Sigmoid colon (tissue), 7 donors: ENCODE measurements at regions of chr2 and their contacts with region 1.

Region 1: DNA sequence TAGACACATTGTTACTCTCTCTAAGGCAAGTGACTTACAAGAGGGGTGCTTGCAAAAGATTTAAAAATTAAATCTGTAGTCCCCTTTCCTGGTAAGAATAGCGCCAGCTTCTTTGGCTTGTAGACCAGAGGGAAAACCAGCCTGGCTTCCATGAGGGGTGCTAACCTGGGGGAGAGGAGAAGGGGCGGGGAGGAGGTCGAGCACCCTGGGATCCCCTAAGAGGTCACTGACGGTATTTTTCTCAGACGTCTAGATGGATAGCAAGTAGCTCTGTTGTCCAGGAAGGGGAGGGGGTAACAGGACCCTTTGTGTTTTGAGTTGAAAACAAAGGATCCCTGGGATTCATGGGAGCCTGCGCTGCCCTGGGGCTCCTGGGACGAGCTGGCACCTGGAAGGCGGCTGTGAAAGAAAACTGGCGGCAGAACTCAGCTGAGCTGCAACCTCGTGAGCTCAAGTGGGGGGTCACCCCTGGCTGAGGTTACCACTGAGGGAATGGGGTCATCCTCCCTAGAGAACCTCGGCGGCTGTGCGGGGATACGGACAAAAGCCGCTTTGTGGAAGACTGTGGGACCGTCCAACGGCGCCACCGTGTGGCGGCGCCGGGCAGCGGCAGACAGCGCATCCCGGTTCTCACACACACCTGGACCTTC is 37.8 kb upstream of the MRPL19 start:
- DNase-seq: no peak
- H3K4me3 ChIP-seq: no peak overlapping the region
- H3K27ac ChIP-seq: no peak overlapping the region
- H3K4me1 ChIP-seq: peaks cover 0 to 5% (median 1%) of the 10 kb centered on the region in 4 donors
- H3K27me3 ChIP-seq: peaks cover 0 to 22% (median 0%) of the 10 kb centered on the region in 3 donors
- CTCF ChIP-seq: peak in 3 of 4 experiments; percentile 39 to 75 (median 45)
- EP300 ChIP-seq: no peak
- POLR2A ChIP-seq: no peak

Region 2: DNA sequence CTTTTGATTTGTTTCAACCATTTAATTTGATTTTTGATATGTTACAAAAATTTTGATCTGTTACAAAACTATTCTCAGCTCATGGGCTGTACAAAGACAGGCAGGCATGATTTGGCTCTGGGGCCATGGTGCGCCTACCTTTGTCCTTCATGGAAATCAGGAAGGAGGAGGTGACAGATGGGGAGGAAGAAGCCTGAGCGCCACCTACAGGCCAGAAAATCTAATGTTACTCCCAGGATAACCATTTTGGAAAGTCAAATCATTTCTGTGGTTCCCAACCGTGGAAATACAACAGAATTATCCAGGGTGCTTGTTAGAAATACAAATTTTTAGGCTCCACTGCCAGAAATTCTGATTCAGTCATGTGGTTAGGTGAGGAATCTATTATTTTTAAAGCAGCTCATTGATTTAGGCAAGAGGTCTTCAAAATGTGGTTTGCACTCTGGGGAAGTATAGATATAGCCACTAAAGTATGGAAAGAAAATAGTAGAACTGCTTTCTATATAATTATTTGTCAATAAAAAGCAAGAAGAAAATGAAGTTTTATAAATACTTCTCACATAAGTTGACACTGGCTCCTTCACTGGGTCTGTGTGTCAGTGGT is 142.0 kb before region 1 on chr2:
- intact Hi-C with region 1: loop called (anchors 10 kb)
- DNase-seq: no peak
- H3K4me3 ChIP-seq: no peak overlapping the region
- H3K27ac ChIP-seq: no peak overlapping the region
- H3K4me1 ChIP-seq: no peaks in the 10 kb centered on the region
- H3K27me3 ChIP-seq: no peaks in the 10 kb centered on the region
- CTCF ChIP-seq: no peak
- EP300 ChIP-seq: no peak
- POLR2A ChIP-seq: no peak

Region 3: DNA sequence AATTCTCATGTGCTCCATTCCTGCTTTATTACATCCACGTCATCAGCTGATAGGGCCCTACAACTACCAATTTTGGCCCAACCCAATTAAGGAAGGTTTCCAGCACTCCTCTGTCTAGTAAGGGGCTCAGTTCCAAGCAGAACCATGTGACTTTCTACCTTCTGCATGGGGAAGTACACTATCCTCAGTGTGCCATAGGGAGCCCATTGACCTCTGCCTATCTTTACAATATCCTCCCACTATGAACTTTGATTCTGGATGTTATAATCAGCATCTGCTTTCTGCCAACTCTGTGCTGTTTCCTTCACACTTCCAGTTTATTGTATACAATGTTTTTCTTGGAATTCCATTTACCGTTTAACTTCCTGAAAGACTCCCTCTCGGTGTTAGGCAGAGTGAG is 155.8 kb after region 1 on chr2:
- intact Hi-C with region 1: no loop called
- DNase-seq: no peak
- H3K4me3 ChIP-seq: no peak overlapping the region
- H3K27ac ChIP-seq: no peak overlapping the region
- H3K4me1 ChIP-seq: no peaks in the 10 kb centered on the region
- H3K27me3 ChIP-seq: no peaks in the 10 kb centered on the region
- CTCF ChIP-seq: no peak
- EP300 ChIP-seq: no peak
- POLR2A ChIP-seq: no peak